ENCODE measurements at regions of chr9 and their contacts with region 1.

Region 1: GRCh38 chr9:132354637-132355355 is at the start of gene SETX:
- DNase-seq: peak; percentile 97
- H3K4me3 Mint-ChIP-seq: peak within 1 kb of the TSS; percentile 86
- H3K27ac Mint-ChIP-seq: peak within 1 kb of the TSS; percentile 88
- H3K4me1 Mint-ChIP-seq: peaks cover 47% of the 10 kb centered on the region
- H3K27me3 Mint-ChIP-seq: peaks cover 2% of the 10 kb centered on the region
- total RNA-seq, gene SETX: 63.7 to 69.4 TPM

Region 2: GRCh38 chr9:132372177-132373095 is 17.6 kb after region 1 on chr9:
- CTCF ChIA-PET with region 1: interaction called, 3 read pairs
- POLR2A ChIA-PET with region 1: interaction called, 13 read pairs
- DNase-seq: no peak
- H3K4me3 Mint-ChIP-seq: no peak overlapping the region
- H3K27ac Mint-ChIP-seq: peak overlapping the region; percentile 70
- H3K4me1 Mint-ChIP-seq: peaks cover 28% of the 10 kb centered on the region
- H3K27me3 Mint-ChIP-seq: no peaks in the 10 kb centered on the region

Region 3: GRCh38 chr9:132406554-132407122 is 51.8 kb after region 1 on chr9 and contains the start of gene TTF1:
- CTCF ChIA-PET with region 1: interaction called, 6 read pairs
- POLR2A ChIA-PET with region 1: interaction called, 62 read pairs
- DNase-seq: peak; percentile 95
- H3K4me3 Mint-ChIP-seq: peak within 1 kb of the TSS; percentile 88
- H3K27ac Mint-ChIP-seq: peak within 1 kb of the TSS; percentile 95
- H3K4me1 Mint-ChIP-seq: peaks cover 57% of the 10 kb centered on the region
- H3K27me3 Mint-ChIP-seq: peaks cover 22% of the 10 kb centered on the region
- total RNA-seq, gene TTF1: 24.5 to 26.1 TPM

Region 4: DNA sequence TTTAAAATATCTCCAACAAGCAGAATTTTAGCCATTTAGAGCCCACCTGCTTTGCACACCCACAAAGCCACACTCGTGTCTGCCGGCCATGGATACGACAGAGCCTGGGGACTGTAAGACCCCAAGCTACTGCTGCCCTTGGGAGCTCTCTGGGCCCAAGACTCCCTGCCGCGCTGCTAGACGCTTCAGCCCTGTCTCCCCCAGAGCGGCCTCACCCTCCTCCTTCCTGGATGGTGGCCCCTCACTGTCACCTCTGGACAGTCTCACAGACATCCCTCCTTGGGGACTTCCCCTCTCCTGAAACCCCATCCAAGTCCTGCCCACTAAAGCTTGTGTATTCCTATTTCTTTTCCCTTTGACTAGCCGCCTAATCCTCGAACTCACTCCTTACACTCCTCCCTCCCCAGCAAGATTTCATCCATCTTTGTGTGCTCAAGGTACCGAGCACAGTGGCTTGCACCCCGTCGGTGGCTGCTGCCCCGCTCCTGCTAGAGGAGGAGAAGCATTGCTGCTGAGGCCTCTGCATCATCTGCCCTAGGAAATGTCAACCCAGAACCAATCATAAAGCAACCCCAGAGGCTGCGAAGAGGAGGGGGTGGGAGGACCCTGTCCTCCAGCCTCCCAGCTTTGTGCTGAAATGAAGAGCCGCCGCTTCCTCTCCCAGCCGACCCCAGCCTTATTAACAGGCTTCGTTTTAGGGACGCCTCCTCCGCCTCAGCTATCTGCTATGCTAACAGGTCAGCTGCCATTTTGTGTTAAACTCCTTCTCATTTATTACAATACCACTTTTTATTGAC is 126.5 kb after region 1 on chr9:
- CTCF ChIA-PET with region 1: no interaction called
- POLR2A ChIA-PET with region 1: no interaction called
- DNase-seq: no peak
- H3K4me3 Mint-ChIP-seq: no peak overlapping the region
- H3K27ac Mint-ChIP-seq: no peak overlapping the region
- H3K4me1 Mint-ChIP-seq: no peaks in the 10 kb centered on the region
- H3K27me3 Mint-ChIP-seq: peaks cover 23% of the 10 kb centered on the region

Region 5: DNA sequence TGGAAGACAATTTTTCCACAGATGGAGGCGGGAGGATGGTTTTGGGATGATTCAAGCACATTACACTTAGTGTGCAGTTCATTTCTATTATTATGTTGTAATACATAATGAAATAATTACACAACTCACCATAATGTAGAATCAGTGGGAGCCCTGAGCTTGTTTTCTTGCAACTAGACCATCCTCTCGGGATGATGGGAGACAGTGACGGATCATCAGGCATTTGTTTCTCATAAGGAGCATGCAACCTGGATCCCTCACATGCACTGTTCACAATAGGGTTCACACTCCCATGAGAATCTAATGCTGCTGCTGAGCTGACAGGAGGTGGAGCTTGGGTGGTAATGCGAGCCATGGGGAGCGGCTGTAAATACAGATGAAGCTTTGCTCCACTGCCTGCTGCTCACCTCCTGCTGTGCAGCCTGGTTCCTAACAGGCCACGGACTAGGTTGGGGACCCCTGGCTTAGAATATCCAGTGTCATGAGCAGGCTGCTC is 1023.0 kb after region 1 on chr9:
- CTCF ChIA-PET with region 1: no interaction called
- POLR2A ChIA-PET with region 1: no interaction called
- DNase-seq: no peak
- H3K4me3 Mint-ChIP-seq: no peak overlapping the region
- H3K27ac Mint-ChIP-seq: no peak overlapping the region
- H3K4me1 Mint-ChIP-seq: peaks cover 18% of the 10 kb centered on the region
- H3K27me3 Mint-ChIP-seq: peaks cover 2% of the 10 kb centered on the region